K562 (cell line): ENCODE measurements at regions of chr7 and their contacts with region 1.

Region 1: GRCh38 chr7:96004578-96004977 is 232.2 kb downstream of the DYNC1I1 start:
- DNase-seq: no peak
- ATAC-seq: no peak
- H3K4me3 ChIP-seq: no peak overlapping the region
- H3K27ac ChIP-seq: no peak overlapping the region
- H3K4me1 ChIP-seq: no peaks in the 10 kb centered on the region
- H3K27me3 ChIP-seq: peaks cover 0 to 6% of the 10 kb centered on the region in 2 experiments; a peak in 1 of 5 replicates
- CTCF ChIP-seq: no peak
- EP300 ChIP-seq: no peak
- POLR2A ChIP-seq: no peak
- RAD21 ChIP-seq: no peak

Region 2: GRCh38 chr7:96017877-96018276 is 13.3 kb after region 1 on chr7:
- CTCF ChIA-PET with region 1: no interaction called
- POLR2A ChIA-PET with region 1: no interaction called
- in situ Hi-C with region 1: no loop called
- intact Hi-C with region 1: no loop called
- DNase-seq: no peak
- ATAC-seq: no peak
- H3K4me3 ChIP-seq: no peak overlapping the region
- H3K27ac ChIP-seq: no peak overlapping the region
- H3K4me1 ChIP-seq: no peaks in the 10 kb centered on the region
- H3K27me3 ChIP-seq: no peaks in the 10 kb centered on the region
- CTCF ChIP-seq: no peak
- EP300 ChIP-seq: no peak
- POLR2A ChIP-seq: no peak
- RAD21 ChIP-seq: no peak

Region 3: GRCh38 chr7:96786261-96786997 is 781.9 kb after region 1 on chr7:
- CTCF ChIA-PET with region 1: no interaction called
- POLR2A ChIA-PET with region 1: no interaction called
- in situ Hi-C with region 1: no loop called
- intact Hi-C with region 1: loop called (anchors 10 kb)
- DNase-seq: no peak
- ATAC-seq: no peak
- H3K4me3 ChIP-seq: no peak overlapping the region
- H3K27ac ChIP-seq: no peak overlapping the region
- H3K4me1 ChIP-seq: no peaks in the 10 kb centered on the region
- H3K27me3 ChIP-seq: peaks cover 0 to 4% of the 10 kb centered on the region in 2 experiments; a peak in 3 of 5 replicates
- CTCF ChIP-seq: no peak
- EP300 ChIP-seq: no peak
- POLR2A ChIP-seq: no peak
- RAD21 ChIP-seq: no peak